ENCODE measurements at regions of chr20 and their contacts with region 1.

Region 1: DNA sequence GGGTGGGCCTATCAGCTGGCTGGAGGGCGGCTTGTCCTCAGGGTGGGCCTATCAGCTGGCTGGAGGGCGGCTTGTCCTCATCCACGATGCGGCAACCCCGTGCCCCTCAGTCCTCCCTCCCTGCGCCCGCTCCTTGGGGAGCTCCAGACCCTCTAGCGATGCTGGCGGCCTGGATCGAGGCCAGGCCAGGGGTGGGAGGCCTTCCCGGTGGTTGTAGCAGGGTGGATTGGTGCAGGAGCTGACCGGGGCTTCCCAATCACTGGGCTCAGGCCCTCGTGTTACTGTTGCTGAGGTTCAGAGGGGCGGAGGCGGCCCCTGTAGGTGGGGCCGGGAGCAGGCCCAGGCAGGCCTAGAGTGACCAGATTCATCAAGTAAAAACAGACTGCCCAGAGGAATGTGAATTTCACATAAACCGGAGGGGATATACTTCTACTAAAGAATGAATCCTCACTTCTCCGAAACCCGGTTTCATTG is 8.8 kb downstream of the SLC17A9 start:
- DNase-seq: peak in 1 of 3 donors; percentile 44
- ATAC-seq: no peak
- H3K4me3 ChIP-seq: no peak overlapping the region
- H3K27ac ChIP-seq: no peak overlapping the region
- H3K4me1 ChIP-seq: peaks cover 0 to 8% (median 2%) of the 10 kb centered on the region in 4 donors
- H3K27me3 ChIP-seq: no peaks in the 10 kb centered on the region
- CTCF ChIP-seq: no peak
- POLR2A ChIP-seq: no peak

Region 2: DNA sequence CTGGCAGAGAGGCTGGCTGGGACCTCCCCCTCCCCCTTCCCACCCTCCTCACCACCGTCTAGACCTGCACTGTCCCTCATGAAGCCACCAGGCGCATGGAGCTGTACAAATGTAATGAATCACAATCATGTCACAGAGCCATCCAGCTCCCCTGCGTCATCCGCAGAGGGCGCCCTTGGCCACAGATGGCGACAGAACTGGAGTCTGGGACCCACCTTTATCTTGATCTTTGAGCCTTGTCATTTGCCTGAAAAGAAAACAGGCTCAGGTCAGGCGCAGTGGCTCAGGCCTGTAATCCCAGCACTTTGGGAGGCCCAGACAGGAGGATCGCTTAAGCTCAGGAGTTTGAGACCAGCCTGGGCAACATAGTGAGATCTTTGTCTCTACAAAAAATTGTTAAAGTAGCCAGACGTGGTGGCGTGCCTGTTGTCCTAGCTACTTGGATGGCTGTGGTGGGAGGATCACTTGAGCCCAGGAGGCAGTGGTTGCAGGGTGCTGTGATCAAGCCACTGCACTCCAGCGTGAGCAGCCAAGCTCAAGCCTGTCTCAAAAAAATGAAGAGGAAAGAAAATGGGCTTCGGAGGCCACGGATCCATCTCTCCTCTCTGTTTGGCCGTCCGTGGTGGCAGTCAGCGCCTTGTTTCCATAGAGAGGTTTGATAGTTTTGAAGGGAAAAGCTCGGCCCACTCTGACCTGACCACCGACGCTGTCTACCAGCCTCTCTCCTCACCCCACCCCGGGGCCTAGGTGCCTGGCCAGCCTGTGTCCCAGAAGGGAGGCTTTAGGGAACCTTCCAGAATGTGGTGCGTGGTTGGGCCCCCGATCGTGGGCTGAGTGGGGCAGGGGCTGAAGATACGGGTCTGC is 138.3 kb before region 1 on chr20:
- intact Hi-C with region 1: no loop called
- DNase-seq: peak in 2 of 3 donors; percentile 64 to 72
- ATAC-seq: peak; percentile 35 to 72 (median 64)
- H3K4me3 ChIP-seq: no peak overlapping the region
- H3K27ac ChIP-seq: no peak overlapping the region
- H3K4me1 ChIP-seq: peaks cover 0 to 5% (median 1%) of the 10 kb centered on the region in 4 donors
- H3K27me3 ChIP-seq: no peaks in the 10 kb centered on the region
- CTCF ChIP-seq: peak; percentile 31 to 52 (median 44)
- POLR2A ChIP-seq: no peak

Region 3: DNA sequence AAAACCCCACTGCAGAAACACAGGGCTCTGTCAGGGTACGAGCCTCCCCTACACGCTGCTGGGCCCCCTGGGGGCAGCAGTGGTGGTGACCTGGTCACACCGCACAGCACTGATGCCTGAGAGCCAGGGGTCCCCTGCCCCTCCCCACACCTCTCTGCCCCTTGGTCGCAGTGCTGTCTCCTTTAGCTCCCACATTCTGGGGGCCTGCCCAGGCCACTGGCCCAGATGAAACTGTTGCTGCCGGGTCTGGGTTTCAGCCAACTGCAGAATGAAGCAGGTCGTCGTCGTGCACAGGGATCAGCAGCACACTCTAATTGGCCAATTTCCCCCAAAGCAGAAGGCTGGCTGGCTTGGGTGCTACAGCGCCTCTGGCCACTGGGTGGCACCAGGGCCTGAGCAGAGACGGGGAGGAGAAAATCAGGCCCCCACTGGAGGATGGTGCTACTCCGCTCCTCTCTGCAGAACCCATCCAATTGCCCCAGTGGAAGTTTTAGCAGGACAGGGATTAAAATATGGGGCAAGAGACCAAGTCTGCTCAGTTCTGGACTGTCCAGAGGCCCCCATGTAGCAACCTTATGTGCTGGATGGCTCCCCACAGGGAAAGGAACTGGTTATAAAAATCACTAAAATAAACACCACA is 61.2 kb before region 1 on chr20:
- intact Hi-C with region 1: loop called in 1 of 2 experiments (anchors 10 kb)
- DNase-seq: peak; percentile 79 to 85 (median 83)
- ATAC-seq: peak; percentile 91 to 97 (median 96)
- H3K4me3 ChIP-seq: no peak overlapping the region
- H3K27ac ChIP-seq: peak overlapping the region in 1 of 3 donors; percentile 13
- H3K4me1 ChIP-seq: peaks cover 0 to 20% (median 3%) of the 10 kb centered on the region in 4 donors
- H3K27me3 ChIP-seq: no peaks in the 10 kb centered on the region
- CTCF ChIP-seq: peak; percentile 86 to 96 (median 88)
- POLR2A ChIP-seq: no peak

Region 4: DNA sequence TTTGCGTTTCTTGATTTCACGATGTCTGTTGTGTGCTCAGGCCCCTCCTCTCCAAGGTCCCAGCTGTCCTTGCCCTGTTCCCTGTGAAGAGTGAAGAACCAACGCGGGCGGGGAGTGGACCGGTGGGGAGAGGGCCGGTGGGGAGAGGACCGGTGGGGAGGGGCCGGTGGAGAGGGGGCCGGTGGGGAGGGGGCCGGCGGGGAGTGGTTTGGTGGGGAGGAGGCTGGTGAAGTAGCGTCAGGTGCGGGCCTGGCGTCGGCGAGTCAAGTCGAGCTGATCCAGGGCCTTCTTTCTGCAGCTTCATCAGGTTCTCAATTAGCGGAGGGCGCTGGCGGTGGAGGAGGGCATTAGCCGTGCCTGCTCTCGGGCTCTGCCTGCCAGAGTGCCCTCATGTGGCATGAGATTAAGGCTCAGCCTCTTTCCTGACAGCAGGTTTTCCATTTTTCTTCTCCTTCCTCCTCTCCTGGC is 66.6 kb after region 1 on chr20:
- intact Hi-C with region 1: no loop called
- DNase-seq: peak in 1 of 3 donors; percentile 52
- ATAC-seq: peak in 2 of 4 donors; percentile 32 to 53
- H3K4me3 ChIP-seq: no peak overlapping the region
- H3K27ac ChIP-seq: no peak overlapping the region
- H3K4me1 ChIP-seq: no peaks in the 10 kb centered on the region
- H3K27me3 ChIP-seq: peaks cover 0 to 3% of the 10 kb centered on the region in 2 donors
- CTCF ChIP-seq: peak in 1 of 4 donors; percentile 3
- POLR2A ChIP-seq: no peak